Cardiac septum (tissue), 1 donor: ENCODE measurements at regions of chr10 and their contacts with region 1.

Region 1: DNA sequence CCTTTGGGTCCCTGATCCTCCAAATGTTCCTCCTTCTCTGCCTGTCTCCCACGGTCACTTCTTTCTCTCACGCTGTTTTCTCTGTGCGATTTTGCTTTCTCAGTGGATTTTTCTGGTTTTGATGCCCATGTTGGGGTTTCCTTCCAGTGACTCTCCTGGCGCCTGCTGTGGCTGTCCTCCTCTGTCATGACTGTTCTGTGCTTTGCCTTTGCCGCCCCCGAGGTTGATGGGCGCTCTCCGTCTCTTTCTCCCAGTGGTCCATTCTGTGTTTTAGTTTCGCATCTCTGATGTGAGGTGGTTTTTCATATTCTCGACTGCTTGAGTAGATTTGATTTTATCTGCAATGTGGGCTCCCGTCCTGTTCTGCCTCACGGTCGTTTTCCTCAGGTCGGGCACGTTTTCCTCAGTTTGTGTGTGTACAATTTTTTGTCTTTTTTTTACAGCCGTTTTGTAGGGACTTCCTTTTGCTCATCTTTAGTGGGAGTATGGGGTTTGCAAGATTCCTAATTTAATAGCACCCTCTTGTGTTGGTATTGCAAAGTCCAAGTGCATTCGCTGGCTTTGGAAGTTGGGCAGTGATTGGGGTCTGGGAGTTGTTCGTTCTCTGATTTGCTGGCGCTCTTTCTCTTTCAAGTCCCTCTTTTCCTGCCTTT is 100.0 kb downstream of the INPP5A start:
- DNase-seq: peak; percentile 62

Region 2: DNA sequence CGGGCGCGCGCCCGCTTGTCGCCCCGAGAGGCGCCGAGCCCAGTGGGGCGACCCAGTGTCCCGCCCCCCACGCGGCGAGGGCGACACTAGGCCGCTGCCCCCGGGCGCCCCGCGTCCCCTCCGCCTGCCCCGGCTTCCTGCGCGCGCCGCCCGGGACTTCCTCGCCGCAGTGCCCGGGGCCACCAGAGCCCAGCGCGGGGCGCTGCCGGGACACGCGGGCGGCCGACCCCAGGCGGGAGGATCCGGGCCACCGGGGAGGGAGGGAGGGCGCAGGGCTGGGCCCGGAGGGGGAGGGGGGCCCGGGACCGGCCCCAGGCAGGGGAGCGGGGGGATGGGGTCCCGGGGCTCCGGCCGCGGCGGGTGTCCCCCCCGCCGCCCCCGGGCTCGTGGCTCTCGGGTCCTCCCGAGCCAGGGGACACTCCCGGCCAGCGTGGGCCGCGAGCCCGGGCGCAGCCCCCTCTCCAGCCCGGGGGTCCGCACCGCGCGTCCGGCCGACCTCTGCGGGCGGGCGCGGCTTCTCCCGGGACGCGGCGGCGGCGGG is 241.0 kb before region 1 on chr10:
- intact Hi-C with region 1: loop called (anchors 5 kb)
- DNase-seq: no peak

Region 3: GRCh38 chr10:132492323-132493025 is 145.1 kb before region 1 on chr10:
- intact Hi-C with region 1: no loop called
- DNase-seq: peak; percentile 67